Posterior vena cava (tissue), 2 donors: ENCODE measurements at regions of chr7 and their contacts with region 1.

Region 1: DNA sequence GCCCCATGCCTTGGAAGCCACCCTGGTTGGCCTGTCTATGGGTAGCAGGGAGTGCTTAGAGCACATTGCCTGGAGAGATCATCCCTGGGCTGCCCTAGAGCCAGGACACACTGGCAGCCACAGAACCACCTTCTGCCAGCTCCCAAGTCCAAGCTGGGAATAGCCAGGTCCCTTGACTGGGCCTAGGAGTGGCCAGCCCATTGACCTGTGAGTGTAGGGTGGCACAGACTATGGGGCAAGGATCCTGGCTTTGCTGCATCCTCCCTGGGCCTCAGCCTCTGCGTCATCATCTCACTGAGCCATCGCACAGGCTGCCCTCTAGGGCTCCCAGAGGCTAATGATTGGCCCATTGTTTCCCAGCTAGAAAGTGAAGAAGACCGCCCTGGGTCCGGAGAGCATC is 7.0 kb downstream of the AQP1 start:
- DNase-seq: peak; percentile 58

Region 2: GRCh38 chr7:30778214-30779025 is 140.3 kb before region 1 on chr7:
- intact Hi-C with region 1: no loop called
- DNase-seq: no peak

Region 3: DNA sequence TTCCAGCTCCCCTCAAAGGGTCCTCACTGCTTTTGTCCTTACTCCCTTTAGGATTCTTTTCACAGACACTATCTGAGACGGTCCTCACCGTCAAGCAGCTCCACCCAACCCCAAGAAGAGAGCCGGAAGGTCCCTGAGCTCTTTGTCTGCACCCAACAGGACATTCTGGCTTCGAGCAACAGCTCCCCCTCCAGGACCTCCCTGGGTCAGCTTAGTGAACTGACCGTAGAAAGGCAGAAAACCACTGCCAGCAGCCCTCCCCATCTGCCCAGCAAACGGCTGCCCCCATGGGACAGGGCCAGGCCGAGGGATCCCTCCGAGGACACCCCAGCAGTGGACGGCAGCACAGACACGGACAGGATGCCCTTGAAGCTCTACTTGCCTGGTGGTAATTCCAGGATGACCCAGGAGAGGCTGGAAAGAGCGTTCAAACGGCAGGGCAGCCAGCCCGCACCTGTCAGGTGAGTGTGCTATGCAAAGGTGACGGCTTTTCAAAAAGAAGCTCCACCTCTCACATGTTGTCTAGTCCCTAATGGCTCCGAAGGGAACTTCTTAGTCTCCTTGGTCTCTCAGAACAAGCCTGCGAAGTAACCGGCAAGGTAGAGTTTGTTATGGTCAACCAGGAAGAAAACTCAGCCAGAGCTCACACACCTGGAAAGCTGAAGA is 127.4 kb before region 1 on chr7:
- intact Hi-C with region 1: loop called in 1 of 2 experiments (anchors 2 kb)
- DNase-seq: no peak

Region 4: GRCh38 chr7:30869794-30870611 is 48.7 kb before region 1 on chr7:
- intact Hi-C with region 1: no loop called
- DNase-seq: no peak